Spleen (tissue), 13 donors: ENCODE measurements at regions of chr1 and their contacts with region 1.

Region 1: DNA sequence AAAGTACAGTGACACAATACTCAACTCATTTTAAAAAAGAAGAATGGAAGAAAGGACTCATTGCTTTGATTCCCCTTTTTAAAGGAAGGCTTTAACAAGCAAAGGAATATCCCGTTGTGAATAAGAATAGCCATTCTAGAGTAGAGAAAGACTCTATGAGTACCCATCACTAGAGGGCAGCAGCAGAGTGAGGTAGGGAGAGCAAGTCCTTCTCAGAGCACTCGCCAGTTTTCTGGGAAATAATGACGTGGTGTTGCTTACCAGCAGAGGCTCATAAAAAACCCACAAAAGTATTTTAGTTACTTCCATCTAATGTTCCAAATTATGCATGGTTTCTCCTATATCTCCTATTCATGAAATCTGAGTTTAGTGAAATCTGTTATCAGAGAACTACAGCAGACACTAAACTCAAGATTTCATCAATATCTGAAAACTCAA is 74.6 kb downstream of the USP24 start:
- DNase-seq: no peak
- H3K4me3 ChIP-seq: no peak overlapping the region
- H3K27ac ChIP-seq: peak overlapping the region in 4 of 8 donors; percentile 7 to 46 (median 33)
- H3K4me1 ChIP-seq: peaks cover 0 to 31% (median 9%) of the 10 kb centered on the region in 6 donors
- H3K27me3 ChIP-seq: no peaks in the 10 kb centered on the region
- CTCF ChIP-seq: peak; percentile 42 to 82 (median 74)
- POLR2A ChIP-seq: no peak

Region 2: GRCh38 chr1:54850737-54851136 is 289.8 kb before region 1 on chr1:
- intact Hi-C with region 1: no loop called
- DNase-seq: no peak
- H3K4me3 ChIP-seq: no peak overlapping the region
- H3K27ac ChIP-seq: no peak overlapping the region
- H3K4me1 ChIP-seq: no peaks in the 10 kb centered on the region
- H3K27me3 ChIP-seq: no peaks in the 10 kb centered on the region
- CTCF ChIP-seq: no peak
- POLR2A ChIP-seq: no peak

Region 3: DNA sequence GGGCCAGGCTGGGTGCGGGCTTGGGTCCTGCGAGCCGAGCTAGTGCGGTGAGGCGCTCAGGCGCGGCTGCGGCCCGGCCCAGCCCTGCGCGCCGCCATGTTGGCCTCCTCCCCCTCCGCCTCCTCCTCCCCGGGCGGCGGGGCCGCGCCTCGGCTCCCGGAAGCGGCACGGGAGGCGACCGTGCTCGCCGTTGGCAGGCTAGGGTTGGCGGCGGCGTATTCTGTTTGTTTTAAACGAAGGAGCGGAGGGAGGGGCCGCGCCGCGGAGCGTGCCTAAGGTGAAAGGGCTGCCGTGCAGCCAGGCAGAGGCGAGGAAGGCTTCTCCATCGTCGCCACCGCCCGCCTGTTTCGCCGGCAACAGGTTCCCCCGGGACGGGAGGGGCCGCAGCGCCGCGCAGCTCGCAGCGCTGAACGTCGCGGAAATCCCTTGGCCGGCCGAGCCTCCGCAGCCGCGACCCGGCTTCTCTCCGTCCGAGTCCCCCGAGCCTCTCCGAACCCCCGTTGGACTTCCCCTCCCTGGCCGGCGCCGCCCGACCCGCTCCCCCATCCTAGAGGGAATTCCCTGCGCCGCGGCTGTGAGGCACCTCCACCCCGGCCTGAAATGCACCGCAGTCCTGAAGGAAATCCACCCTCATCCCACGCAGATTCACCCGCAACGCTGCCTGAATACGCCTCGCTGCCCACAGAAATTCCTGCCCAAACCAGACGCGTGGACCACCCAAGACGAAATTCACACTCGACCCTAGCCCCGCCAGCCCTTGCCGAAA is 74.9 kb after region 1 on chr1 and contains the start of gene USP24:
- intact Hi-C with region 1: no loop called
- DNase-seq: peak; percentile 97
- H3K4me3 ChIP-seq: peak within 1 kb of the TSS; percentile 71 to 93 (median 77)
- H3K27ac ChIP-seq: peak within 1 kb of the TSS; percentile 96 to 99 (median 98)
- H3K4me1 ChIP-seq: peaks cover 50 to 74% (median 69%) of the 10 kb centered on the region in 6 donors
- H3K27me3 ChIP-seq: no peaks in the 10 kb centered on the region
- CTCF ChIP-seq: peak in 1 of 11 experiments; percentile 23
- POLR2A ChIP-seq: peak; percentile 62 to 86 (median 66)
- total RNA-seq, gene USP24: 57.9 to 94.5 (median 74.2) TPM

Region 4: GRCh38 chr1:55277377-55278130 is 137.0 kb after region 1 on chr1:
- intact Hi-C with region 1: loop called (anchors 5 kb)
- DNase-seq: peak; percentile 91
- H3K4me3 ChIP-seq: peak overlapping the region in 1 of 8 donors; percentile 25
- H3K27ac ChIP-seq: peak overlapping the region in 4 of 8 donors; percentile 3 to 58 (median 30)
- H3K4me1 ChIP-seq: peaks cover 0 to 29% (median 21%) of the 10 kb centered on the region in 6 donors
- H3K27me3 ChIP-seq: no peaks in the 10 kb centered on the region
- CTCF ChIP-seq: peak; percentile 72 to 92 (median 83)
- POLR2A ChIP-seq: no peak